ENCODE measurements at regions of chr1 and their contacts with region 1.

Region 1: GRCh38 chr1:28886731-28887418 is 27.5 kb upstream of the EPB41 start:
- DNase-seq: peak; percentile 86
- H3K4me3 ChIP-seq: peak overlapping the region; percentile 69 to 95 (median 78)
- H3K27ac ChIP-seq: peak overlapping the region; percentile 66
- H3K4me1 ChIP-seq: peaks cover 25% of the 10 kb centered on the region
- H3K27me3 ChIP-seq: no peaks in the 10 kb centered on the region
- CTCF ChIP-seq: no peak

Region 2: GRCh38 chr1:28668191-28668955 is 218.5 kb before region 1 on chr1 and contains the start of gene GMEB1:
- CTCF ChIA-PET with region 1: no interaction called
- dilution Hi-C with region 1: no loop called
- in situ Hi-C with region 1: loop called in 1 of 2 experiments (anchors 25 kb)
- intact Hi-C with region 1: no loop called
- DNase-seq: peak; percentile 80
- H3K4me3 ChIP-seq: peak within 1 kb of the TSS; percentile 70 to 92 (median 73)
- H3K27ac ChIP-seq: peak within 1 kb of the TSS; percentile 81
- H3K4me1 ChIP-seq: peaks cover 6% of the 10 kb centered on the region
- H3K27me3 ChIP-seq: no peaks in the 10 kb centered on the region
- CTCF ChIP-seq: no peak
- total RNA-seq, gene GMEB1: 10.1 to 11.0 TPM

Region 3: DNA sequence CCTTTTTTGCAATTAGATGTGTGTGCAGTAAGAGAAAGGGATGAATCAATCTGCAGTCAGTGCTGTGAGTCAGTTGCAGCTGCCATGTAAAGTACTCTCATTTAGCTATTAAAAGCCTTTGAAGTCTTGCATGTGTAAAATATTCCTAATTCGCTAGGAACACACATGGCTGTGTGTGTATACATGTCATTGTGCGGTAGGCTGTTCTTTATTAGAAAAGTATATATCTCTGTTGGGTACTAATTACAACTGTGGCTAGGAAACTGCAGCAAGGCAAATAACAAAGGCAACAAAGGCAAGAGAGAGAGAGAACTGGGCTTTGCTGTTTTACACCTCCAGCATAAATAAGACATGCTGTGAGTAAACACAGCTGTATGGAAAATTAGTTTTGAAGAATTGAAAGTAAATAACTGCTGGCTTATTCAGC is 69.2 kb after region 1 on chr1:
- CTCF ChIA-PET with region 1: interaction called, 8 read pairs
- dilution Hi-C with region 1: loop called (anchors 5 kb)
- in situ Hi-C with region 1: no loop called
- intact Hi-C with region 1: no loop called
- DNase-seq: peak; percentile 28
- H3K4me3 ChIP-seq: no peak overlapping the region
- H3K27ac ChIP-seq: no peak overlapping the region
- H3K4me1 ChIP-seq: peaks cover 3% of the 10 kb centered on the region
- H3K27me3 ChIP-seq: no peaks in the 10 kb centered on the region
- CTCF ChIP-seq: no peak

Region 4: DNA sequence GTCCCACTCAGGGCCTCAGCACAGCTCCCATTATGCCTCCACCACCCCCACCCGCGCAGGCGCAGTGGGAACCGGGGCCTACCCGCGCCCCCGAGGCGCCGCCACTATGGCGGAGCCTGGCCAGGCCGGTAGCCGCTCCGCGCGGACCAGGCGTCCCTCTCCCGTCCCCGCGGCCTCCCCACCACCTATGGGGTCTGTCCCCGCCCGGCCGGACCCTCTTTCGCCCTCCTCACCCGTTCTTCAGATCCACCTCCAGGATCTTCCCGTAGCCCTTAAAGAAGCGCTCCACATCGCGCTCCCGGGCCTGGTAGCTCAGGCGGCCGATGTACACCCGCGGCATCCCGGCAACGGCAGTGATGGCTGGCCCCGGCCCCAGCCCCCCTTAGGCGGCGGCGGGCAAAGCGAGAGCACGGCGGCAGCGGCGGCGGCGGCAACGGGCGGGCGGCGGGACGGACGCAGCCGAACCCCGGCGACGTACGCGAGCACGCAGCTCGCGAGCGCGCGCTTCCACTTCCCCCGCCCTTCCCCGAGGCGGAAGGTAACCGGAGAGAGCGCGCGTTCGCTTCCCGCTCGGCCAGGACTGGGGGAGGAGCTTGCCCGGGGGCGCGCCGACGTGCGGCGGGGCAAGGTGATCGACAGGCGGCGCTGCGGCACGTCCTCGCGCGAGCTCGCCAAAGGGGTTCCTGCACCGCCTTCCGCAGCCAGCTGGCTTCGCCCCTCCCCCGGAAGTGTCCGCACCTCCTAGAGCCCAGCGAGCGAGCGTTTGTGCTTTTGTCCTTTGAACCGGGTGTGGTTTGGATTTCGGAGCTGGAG is 294.7 kb after region 1 on chr1 and contains the start of gene SRSF4:
- CTCF ChIA-PET with region 1: no interaction called
- dilution Hi-C with region 1: no loop called
- in situ Hi-C with region 1: no loop called
- intact Hi-C with region 1: loop called (anchors 5 kb)
- DNase-seq: peak; percentile 98
- H3K4me3 ChIP-seq: peak within 1 kb of the TSS; percentile 77 to 92 (median 91)
- H3K27ac ChIP-seq: peak within 1 kb of the TSS; percentile 92
- H3K4me1 ChIP-seq: peaks cover 21% of the 10 kb centered on the region
- H3K27me3 ChIP-seq: no peaks in the 10 kb centered on the region
- CTCF ChIP-seq: peak; percentile 40 to 75
- total RNA-seq, gene SRSF4: 22.5 to 93.1 TPM

Region 5: DNA sequence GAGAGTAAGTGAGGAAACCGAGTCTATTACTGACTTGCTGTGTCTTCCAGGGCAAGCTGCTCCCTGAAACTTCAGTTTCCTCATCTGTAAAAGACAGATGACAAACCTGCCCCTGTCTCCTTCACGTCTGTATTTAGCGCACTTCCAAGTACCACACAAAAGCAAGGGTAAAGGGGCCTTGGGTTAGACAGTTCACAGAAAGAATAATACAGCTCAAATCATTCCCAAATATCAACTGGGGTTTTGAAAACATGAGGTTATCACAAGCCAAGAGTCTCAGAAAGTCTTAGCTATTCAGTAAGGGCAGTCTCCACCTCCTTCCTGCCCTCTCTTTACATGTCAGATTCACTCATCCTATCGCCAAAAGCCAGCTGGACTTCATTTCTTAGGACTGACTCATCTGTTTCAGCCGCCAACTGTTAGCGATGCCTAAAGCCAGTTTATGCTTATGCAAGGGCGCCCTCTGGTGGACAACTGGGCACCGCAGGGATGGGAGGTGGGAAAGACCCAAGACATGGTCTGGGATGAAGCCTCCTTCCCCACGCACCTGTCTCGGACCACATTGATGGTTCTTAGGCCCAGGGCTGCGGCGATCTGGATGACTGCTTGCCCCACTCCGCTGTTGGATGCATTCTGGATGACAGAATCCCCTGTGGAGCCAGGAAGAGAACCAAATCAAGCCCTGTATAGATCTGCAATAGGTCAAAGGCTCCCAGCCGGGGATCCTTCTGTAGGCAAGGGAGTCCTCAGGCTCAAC is 315.9 kb after region 1 on chr1:
- CTCF ChIA-PET with region 1: interaction called, 28 read pairs
- dilution Hi-C with region 1: no loop called
- in situ Hi-C with region 1: loop called (anchors 5 to 10 kb)
- intact Hi-C with region 1: loop called (anchors 1 kb)
- DNase-seq: peak; percentile 94
- H3K4me3 ChIP-seq: no peak overlapping the region
- H3K27ac ChIP-seq: peak overlapping the region; percentile 53
- H3K4me1 ChIP-seq: peaks cover 12% of the 10 kb centered on the region
- H3K27me3 ChIP-seq: no peaks in the 10 kb centered on the region
- CTCF ChIP-seq: peak; percentile 97 to 98